Activated CD4-positive, alpha-beta memory T cell treated with anti-CD3 and anti-CD28 coated beads for 36 hours (primary cell): ENCODE measurements at regions of chr1 and their contacts with region 1.

Region 1: DNA sequence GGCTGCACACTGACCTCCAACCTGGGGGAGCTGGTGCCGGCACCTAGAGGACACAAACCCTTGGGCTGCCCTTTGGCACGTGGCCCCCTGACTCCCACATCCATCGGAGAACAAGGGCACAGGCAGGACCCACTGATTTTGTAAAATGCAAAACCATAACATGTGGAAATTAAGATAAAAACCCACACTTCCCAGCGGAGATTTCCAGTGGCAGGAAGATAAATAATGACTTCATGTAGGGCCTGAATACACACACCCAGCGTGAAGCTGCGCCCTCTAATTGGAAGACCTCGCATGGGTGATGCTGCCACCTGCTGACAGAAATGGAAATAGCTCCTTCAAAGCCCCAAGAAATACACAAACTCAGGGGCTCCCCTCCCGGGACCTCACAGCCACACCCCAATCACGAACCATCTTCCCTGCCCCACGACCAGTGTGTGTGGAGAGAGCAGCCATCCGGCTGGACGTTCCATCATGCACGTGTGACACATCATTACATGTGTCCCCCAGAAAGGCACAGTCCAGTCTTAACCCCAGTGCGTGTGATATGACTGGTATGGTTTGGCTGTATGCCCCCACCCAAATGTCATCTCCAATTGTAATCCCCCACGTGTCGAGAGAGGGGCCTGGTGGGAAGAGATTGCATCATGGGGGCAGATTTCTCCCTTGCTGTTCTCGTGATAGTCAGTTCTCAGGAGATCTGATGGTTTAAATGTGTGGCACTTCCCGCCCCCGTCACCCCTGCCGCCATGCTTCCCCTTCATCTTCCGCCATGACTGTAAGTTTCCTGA is 5.7 kb upstream of the TPRG1L start:
- DNase-seq: peak; percentile 77
- H3K4me3 Mint-ChIP-seq: no peak overlapping the region
- H3K27ac Mint-ChIP-seq: no peak overlapping the region
- H3K4me1 Mint-ChIP-seq: peaks cover 22% of the 10 kb centered on the region
- H3K27me3 Mint-ChIP-seq: no peaks in the 10 kb centered on the region

Region 2: GRCh38 chr1:3453203-3453761 is 165.8 kb before region 1 on chr1:
- CTCF ChIA-PET with region 1: interaction called, 75 read pairs
- POLR2A ChIA-PET with region 1: no interaction called
- intact Hi-C with region 1: loop called (anchors 1 kb)
- DNase-seq: peak; percentile 81
- H3K4me3 Mint-ChIP-seq: no peak overlapping the region
- H3K27ac Mint-ChIP-seq: no peak overlapping the region
- H3K4me1 Mint-ChIP-seq: peaks cover 2% of the 10 kb centered on the region
- H3K27me3 Mint-ChIP-seq: peaks cover 13% of the 10 kb centered on the region

Region 3: DNA sequence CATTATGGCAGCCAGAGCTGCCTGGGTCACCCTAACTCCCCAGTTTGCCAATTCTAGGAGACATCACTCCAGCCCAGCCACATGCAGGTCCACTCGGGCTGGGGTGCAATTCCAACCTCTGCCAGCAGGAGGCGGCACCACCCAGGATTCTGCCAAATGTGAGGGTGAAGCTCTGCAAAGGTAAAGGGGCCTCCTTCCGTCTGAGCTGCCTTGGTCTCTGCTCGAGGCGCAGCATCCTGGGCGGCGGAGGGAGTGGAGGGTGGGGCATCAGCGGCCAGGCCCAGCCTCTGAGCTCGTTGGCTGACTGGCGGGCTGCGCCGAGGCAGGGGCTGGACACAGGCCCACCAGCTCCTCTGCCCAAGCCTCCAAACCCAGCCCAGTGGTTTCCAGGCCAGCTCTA is 100.8 kb before region 1 on chr1:
- CTCF ChIA-PET with region 1: interaction called, 12 read pairs
- POLR2A ChIA-PET with region 1: no interaction called
- intact Hi-C with region 1: no loop called
- DNase-seq: peak; percentile 52
- H3K4me3 Mint-ChIP-seq: no peak overlapping the region
- H3K27ac Mint-ChIP-seq: no peak overlapping the region
- H3K4me1 Mint-ChIP-seq: no peaks in the 10 kb centered on the region
- H3K27me3 Mint-ChIP-seq: no peaks in the 10 kb centered on the region

Region 4: DNA sequence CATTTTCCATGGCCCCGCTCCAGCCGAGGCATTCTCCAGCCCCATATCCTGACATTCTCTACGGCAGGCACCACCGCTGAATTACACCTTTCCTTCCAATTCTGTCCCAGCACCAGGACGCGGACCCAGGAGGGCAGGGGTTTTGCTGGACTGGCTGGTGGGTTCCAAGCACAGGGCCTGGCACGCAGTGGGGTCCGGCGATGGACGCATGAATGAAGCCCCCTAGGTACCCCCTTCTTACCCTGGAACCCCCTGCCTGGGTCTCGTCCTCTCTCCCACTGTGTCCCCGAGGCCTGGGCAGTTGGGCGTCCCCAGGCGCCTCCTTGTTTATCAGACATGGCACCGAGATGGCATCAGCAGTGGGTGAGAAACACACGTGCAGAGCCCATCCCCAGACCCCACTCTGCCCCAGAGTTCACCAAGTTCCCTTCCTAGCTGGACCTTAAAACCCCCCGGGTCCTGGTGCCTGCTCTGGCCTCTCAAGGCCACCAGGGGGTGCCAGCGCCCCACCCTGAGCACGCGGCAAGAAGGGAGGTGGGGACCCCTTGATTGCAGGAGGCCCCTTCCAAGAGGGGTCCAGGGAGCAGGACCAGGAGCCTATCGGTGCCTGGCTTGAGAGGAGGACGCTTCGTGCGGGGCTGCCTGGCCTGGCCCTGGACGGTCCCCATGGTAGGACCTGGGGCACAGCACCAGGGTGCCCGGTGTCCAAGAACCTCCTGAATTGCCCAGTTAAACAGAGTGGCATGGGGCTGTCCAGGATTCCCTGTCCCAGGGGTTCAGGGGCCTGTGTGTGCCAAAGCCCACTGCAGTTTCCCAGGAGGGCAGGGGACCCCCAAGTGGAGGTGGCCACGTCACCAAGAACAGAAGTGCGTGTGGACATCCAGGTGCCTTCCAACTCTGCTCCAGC is 53.9 kb before region 1 on chr1:
- CTCF ChIA-PET with region 1: interaction called, 66 read pairs
- POLR2A ChIA-PET with region 1: no interaction called
- intact Hi-C with region 1: loop called (anchors 1 kb)
- DNase-seq: peak; percentile 28
- H3K4me3 Mint-ChIP-seq: no peak overlapping the region
- H3K27ac Mint-ChIP-seq: no peak overlapping the region
- H3K4me1 Mint-ChIP-seq: no peaks in the 10 kb centered on the region
- H3K27me3 Mint-ChIP-seq: no peaks in the 10 kb centered on the region

Region 5: GRCh38 chr1:3577300-3577699 is 41.8 kb before region 1 on chr1:
- CTCF ChIA-PET with region 1: no interaction called
- POLR2A ChIA-PET with region 1: no interaction called
- intact Hi-C with region 1: no loop called
- DNase-seq: no peak
- H3K4me3 Mint-ChIP-seq: no peak overlapping the region
- H3K27ac Mint-ChIP-seq: no peak overlapping the region
- H3K4me1 Mint-ChIP-seq: no peaks in the 10 kb centered on the region
- H3K27me3 Mint-ChIP-seq: no peaks in the 10 kb centered on the region

Region 6: GRCh38 chr1:3727042-3727824 is 108.2 kb after region 1 on chr1:
- CTCF ChIA-PET with region 1: interaction called, 18 read pairs
- POLR2A ChIA-PET with region 1: no interaction called
- intact Hi-C with region 1: loop called (anchors 10 kb)
- DNase-seq: peak; percentile 25
- H3K4me3 Mint-ChIP-seq: no peak overlapping the region
- H3K27ac Mint-ChIP-seq: no peak overlapping the region
- H3K4me1 Mint-ChIP-seq: no peaks in the 10 kb centered on the region
- H3K27me3 Mint-ChIP-seq: peaks cover 4% of the 10 kb centered on the region